Activated CD4-positive, alpha-beta T cell treated with anti-CD3 and anti-CD28 coated beads, Interleukin-2, amount 10 ng/mL, durations not matched to agents 24 days and 14 days (primary cell): ENCODE measurements at regions of chr5 and their contacts with region 1.

Region 1: GRCh38 chr5:72138943-72139521 is 31.8 kb downstream of the MAP1B start:
- DNase-seq: peak; percentile 56
- H3K4me3 Mint-ChIP-seq: no peak overlapping the region
- H3K27ac Mint-ChIP-seq: no peak overlapping the region
- H3K4me1 Mint-ChIP-seq: peaks cover 8% of the 10 kb centered on the region
- H3K27me3 Mint-ChIP-seq: peaks cover 53% of the 10 kb centered on the region

Region 2: GRCh38 chr5:72268753-72269410 is 129.8 kb after region 1 on chr5:
- intact Hi-C with region 1: loop called (anchors 1 kb)
- DNase-seq: peak; percentile 78
- H3K4me3 Mint-ChIP-seq: no peak overlapping the region
- H3K27ac Mint-ChIP-seq: no peak overlapping the region
- H3K4me1 Mint-ChIP-seq: no peaks in the 10 kb centered on the region
- H3K27me3 Mint-ChIP-seq: no peaks in the 10 kb centered on the region

Region 3: GRCh38 chr5:72673623-72674022 is 534.6 kb after region 1 on chr5:
- intact Hi-C with region 1: no loop called
- DNase-seq: no peak
- H3K4me3 Mint-ChIP-seq: no peak overlapping the region
- H3K27ac Mint-ChIP-seq: no peak overlapping the region
- H3K4me1 Mint-ChIP-seq: no peaks in the 10 kb centered on the region
- H3K27me3 Mint-ChIP-seq: peaks cover 5% of the 10 kb centered on the region